Gastrocnemius medialis (tissue), 4 donors: ENCODE measurements at regions of chr3 and their contacts with region 1.

Region 1: GRCh38 chr3:71583566-71584449 is at the start of gene FOXP1:
- DNase-seq: peak; percentile 57 to 69
- ATAC-seq: peak; percentile 72 to 75
- H3K4me3 ChIP-seq: peak within 1 kb of the TSS; percentile 75 to 90 (median 83)
- H3K27ac ChIP-seq: peak within 1 kb of the TSS; percentile 92 to 94 (median 93)
- H3K4me1 ChIP-seq: peaks cover 23 to 25% of the 10 kb centered on the region in 2 donors
- H3K27me3 ChIP-seq: no peaks in the 10 kb centered on the region
- CTCF ChIP-seq: peak in 1 of 5 experiments; percentile 6
- POLR2A ChIP-seq: peak; percentile 40 to 74
- total RNA-seq, gene FOXP1: 13.2 to 46.6 (median 29.2) TPM

Region 2: DNA sequence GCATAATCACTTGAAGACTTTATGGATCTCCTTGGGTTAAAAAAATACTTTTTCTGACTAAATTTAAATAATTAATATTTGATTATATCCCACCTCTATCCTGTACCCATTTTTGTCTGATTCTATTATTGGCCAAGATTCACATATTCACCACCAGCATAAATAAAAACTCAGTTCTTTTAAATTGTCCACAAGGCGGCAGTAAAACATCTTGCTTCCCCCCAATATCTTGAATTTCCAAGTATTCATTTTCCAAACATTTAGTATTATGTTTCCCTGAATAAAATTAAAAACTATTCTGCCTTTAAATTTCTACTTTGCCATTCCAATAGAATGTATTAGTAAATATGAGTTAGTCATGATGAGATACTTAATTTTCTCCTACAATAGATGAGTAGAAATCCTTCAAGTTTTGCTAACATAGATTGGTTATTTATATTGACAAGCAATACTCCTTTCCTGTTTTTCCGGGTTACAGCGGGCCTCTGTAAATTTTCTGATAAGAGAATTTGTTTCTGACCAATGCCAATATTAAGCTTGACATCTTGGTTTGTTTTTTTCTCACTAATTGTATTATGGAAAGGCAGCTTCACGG is 1052.6 kb before region 1 on chr3:
- in situ Hi-C with region 1: loop called in 1 of 4 experiments (anchors 25 kb)
- intact Hi-C with region 1: no loop called
- DNase-seq: no peak
- ATAC-seq: no peak
- H3K4me3 ChIP-seq: no peak overlapping the region
- H3K27ac ChIP-seq: no peak overlapping the region
- H3K4me1 ChIP-seq: no peaks in the 10 kb centered on the region
- H3K27me3 ChIP-seq: no peaks in the 10 kb centered on the region
- CTCF ChIP-seq: peak in 3 of 5 experiments; percentile 13 to 45 (median 37)
- POLR2A ChIP-seq: no peak

Region 3: DNA sequence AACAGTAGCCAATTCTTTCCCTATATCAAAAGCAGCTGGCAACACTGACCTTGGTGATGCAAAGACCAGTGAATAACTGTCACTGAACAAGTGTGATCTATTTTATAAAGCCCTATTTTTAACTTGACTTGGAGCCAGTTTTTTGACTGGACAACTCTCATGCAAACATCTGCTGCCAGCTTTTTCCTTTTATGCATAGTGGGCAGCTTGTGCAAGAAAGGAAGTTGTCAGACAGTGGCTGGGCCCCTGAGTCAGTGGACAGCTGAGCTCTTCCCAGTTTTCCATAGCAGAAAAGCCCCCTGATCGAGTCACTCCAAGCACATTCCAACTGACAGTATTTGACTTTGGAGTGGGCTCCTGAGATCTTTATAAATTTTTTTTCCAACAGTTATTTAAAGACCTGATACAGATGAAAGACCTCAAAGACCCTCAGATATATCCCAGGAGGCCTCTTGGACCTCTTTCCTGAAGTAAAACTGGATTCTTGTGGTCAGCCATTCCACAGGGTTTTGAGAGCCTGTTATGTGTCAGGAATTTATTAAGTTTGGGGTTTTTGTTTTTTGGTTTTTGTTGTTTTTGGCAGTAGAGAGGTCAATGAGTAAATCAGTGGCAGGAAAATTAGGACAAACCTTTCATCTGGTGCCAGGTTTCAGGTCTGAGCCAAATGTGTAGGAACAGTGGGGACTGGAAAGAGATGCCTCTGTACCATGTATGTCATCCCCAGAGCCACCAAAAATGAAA is 751.2 kb before region 1 on chr3:
- in situ Hi-C with region 1: no loop called
- intact Hi-C with region 1: loop called (anchors 10 kb)
- DNase-seq: peak in 1 of 2 donors; percentile 42
- ATAC-seq: peak; percentile 81 to 86
- H3K4me3 ChIP-seq: no peak overlapping the region
- H3K27ac ChIP-seq: peak overlapping the region; percentile 20 to 56 (median 55)
- H3K4me1 ChIP-seq: peaks cover 10 to 21% of the 10 kb centered on the region in 2 donors
- H3K27me3 ChIP-seq: no peaks in the 10 kb centered on the region
- CTCF ChIP-seq: no peak
- POLR2A ChIP-seq: peak in 1 of 2 donors; percentile 13

Region 4: DNA sequence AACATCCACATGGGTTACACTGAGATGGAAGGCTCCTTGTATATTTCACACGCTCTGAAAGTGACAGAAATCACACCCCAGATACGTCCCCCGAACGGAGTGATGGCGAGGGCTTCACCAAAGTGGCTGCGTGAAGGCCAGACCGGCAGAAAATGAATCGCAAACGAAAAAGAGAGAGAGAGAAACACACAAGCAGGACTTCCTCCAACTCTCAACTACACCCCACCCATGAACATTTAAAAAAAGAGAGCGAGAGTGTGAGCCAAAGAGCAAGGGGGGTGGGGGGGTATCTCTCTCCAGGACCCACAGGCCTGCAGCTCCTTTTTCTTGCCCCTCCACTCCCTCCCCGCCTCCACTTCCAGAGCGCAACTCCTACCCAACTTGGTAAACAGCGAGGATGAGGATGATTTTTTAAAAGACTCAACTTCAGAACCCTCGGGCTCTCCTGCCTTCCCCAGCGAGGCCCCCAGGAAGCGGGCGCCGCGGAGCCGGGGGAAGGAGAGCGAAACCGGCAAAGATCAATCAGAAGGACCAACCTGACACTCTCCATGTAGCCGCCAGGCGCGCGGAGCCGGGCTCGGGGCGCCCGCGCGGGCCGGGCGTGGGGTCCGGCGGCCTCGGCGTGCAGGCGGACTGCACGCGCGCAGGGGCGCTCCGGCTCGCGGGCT is 519.4 kb before region 1 on chr3:
- in situ Hi-C with region 1: no loop called
- intact Hi-C with region 1: loop called (anchors 2 kb)
- DNase-seq: peak in 1 of 2 donors; percentile 9
- ATAC-seq: peak; percentile 20 to 28
- H3K4me3 ChIP-seq: peak overlapping the region; percentile 58 to 83 (median 72)
- H3K27ac ChIP-seq: peak overlapping the region; percentile 86 to 91 (median 89)
- H3K4me1 ChIP-seq: peaks cover 49 to 52% of the 10 kb centered on the region in 2 donors
- H3K27me3 ChIP-seq: no peaks in the 10 kb centered on the region
- CTCF ChIP-seq: peak in 3 of 5 experiments; percentile 8 to 20 (median 18)
- POLR2A ChIP-seq: peak; percentile 45 to 64

Region 5: GRCh38 chr3:71305231-71306206 is 278.3 kb before region 1 on chr3:
- in situ Hi-C with region 1: no loop called
- intact Hi-C with region 1: loop called (anchors 10 kb)
- DNase-seq: peak in 1 of 2 donors; percentile 50
- ATAC-seq: peak; percentile 79 to 91
- H3K4me3 ChIP-seq: peak overlapping the region; percentile 36 to 55 (median 52)
- H3K27ac ChIP-seq: peak overlapping the region; percentile 69 to 79 (median 76)
- H3K4me1 ChIP-seq: peaks cover 27 to 34% of the 10 kb centered on the region in 2 donors
- H3K27me3 ChIP-seq: no peaks in the 10 kb centered on the region
- CTCF ChIP-seq: no peak
- POLR2A ChIP-seq: no peak

Region 6: GRCh38 chr3:71542521-71543370 is 41.1 kb before region 1 on chr3:
- in situ Hi-C with region 1: no loop called
- intact Hi-C with region 1: loop called (anchors 5 kb)
- DNase-seq: peak; percentile 69 to 84
- ATAC-seq: peak; percentile 98 to 99
- H3K4me3 ChIP-seq: peak overlapping the region in 3 of 4 donors; percentile 6 to 42 (median 28)
- H3K27ac ChIP-seq: peak overlapping the region; percentile 39 to 68 (median 60)
- H3K4me1 ChIP-seq: peaks cover 17 to 23% of the 10 kb centered on the region in 2 donors
- H3K27me3 ChIP-seq: no peaks in the 10 kb centered on the region
- CTCF ChIP-seq: no peak
- POLR2A ChIP-seq: no peak